ENCODE measurements at regions of chr11 and their contacts with region 1.

Region 1: GRCh38 chr11:114180301-114181055 is 115.7 kb upstream of the NNMT start:
- DNase-seq: peak; percentile 50 to 71 (median 67)
- H3K4me3 ChIP-seq: no peak overlapping the region
- H3K27ac ChIP-seq: no peak overlapping the region
- H3K4me1 ChIP-seq: peaks cover 13 to 36% (median 21%) of the 10 kb centered on the region in 4 experiments
- H3K27me3 ChIP-seq: no peaks in the 10 kb centered on the region

Region 2: GRCh38 chr11:114036156-114036811 is 144.2 kb before region 1 on chr11:
- CTCF ChIA-PET with region 1: interaction called, 103 read pairs
- POLR2A ChIA-PET with region 1: no interaction called
- DNase-seq: peak; percentile 73 to 76 (median 75)
- H3K4me3 ChIP-seq: peak overlapping the region in 4 of 7 experiments; percentile 6 to 66 (median 37)
- H3K27ac ChIP-seq: no peak overlapping the region
- H3K4me1 ChIP-seq: peaks cover 0 to 9% (median 6%) of the 10 kb centered on the region in 4 experiments
- H3K27me3 ChIP-seq: peaks cover 0 to 4% (median 0%) of the 10 kb centered on the region in 5 experiments

Region 3: DNA sequence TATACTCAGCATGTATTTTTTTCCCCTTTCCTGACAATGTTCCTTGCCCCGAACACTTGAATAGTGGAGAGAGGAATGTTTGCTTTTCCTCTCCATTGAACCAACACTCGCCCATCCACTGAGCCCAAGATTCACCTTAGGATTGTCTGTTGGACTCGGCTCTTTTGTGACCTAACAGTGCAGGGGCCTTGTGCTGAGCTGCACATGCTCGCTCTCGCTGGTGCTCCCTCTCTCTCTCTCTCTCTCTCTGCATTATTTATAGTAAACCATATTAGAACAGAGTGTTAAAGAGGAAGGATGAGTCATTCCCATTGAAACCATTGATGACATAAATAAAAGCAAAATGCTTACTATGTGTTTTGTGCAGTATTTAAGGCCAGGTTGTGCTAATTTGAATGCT is 100.3 kb before region 1 on chr11:
- CTCF ChIA-PET with region 1: interaction called, 25 read pairs
- POLR2A ChIA-PET with region 1: interaction called, 11 read pairs
- DNase-seq: peak; percentile 65 to 87 (median 79)
- H3K4me3 ChIP-seq: no peak overlapping the region
- H3K27ac ChIP-seq: peak overlapping the region; percentile 92 to 95
- H3K4me1 ChIP-seq: peaks cover 44 to 97% (median 93%) of the 10 kb centered on the region in 4 experiments
- H3K27me3 ChIP-seq: no peaks in the 10 kb centered on the region

Region 4: DNA sequence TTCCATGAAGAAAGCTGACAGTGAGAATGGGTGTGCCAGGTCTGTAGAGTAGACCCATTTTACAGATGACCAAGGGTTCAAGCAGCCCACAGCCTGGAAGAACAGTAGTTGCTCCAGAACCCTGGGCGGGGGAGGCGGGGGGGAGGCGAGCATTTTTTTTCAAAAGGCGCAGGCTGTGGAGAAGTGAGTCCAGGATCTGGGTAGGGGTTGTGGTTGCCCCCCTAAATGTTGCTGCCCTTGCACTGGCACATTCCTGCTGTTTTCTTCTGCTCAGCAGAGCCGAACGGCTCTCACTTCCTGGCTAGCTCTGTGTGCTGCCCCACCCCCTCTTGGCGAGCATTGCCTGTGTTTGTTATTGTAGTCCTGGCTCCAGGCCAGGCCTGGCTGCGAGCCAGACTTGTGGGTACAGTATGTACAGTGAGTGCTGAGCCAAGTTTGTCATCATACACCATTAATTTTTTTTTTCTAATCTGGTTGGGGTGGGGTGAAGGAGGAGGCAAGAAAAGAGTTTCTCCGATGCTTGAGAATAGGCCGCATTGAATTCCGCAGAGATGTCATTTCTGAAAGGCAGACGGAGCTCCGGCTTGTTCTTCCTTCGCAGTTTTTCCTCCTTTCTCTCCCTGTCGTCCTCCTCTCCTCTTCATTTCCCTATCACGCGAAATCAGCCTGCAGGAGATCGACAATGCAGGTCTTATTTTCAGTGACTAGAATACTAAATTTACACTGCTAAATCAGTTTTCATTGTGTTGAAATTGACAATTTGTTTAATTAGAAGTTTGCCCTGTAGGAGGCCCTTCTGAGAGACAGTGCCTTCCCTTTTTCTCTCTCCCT is 20.5 kb before region 1 on chr11:
- CTCF ChIA-PET with region 1: interaction called, 114 read pairs
- POLR2A ChIA-PET with region 1: no interaction called
- DNase-seq: peak; percentile 95 to 98 (median 97)
- H3K4me3 ChIP-seq: peak overlapping the region in 3 of 7 experiments; percentile 44 to 68 (median 51)
- H3K27ac ChIP-seq: peak overlapping the region in 1 of 2 experiments; percentile 31
- H3K4me1 ChIP-seq: peaks cover 6 to 53% (median 40%) of the 10 kb centered on the region in 4 experiments
- H3K27me3 ChIP-seq: peaks cover 0 to 3% (median 0%) of the 10 kb centered on the region in 5 experiments

Region 5: DNA sequence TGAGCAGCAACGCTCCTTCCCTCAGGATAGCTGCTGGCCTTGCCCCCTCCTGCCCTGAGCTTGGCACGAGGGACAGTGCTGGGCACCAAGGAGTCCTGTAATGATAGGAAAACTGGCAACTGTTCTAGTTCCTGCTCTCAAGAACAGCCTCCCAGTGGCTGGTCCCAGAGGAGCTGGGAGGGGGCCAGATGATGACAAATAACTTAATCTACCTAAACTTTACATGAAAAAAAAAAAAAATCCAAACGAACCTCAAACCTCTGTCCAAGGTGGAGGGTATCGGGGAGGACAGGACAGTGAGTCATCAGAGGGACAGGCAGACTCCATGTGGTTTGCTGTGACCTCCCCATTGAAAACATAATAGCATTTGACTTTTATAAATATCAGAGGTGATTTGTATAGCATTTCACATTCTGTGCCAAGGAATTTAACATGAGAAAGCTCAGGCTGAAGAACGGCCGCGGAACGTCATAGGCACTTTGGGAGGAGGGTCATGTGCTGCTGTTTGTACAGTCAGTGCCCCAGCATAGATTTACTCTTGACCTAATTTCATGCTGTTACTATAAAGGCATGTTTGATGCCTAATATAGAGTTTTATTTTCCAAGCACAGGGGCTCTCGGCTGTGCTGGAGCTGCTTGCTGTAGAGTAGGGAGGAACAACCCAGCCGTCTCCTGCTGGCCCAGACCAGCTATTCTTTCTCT is 17.5 kb after region 1 on chr11:
- CTCF ChIA-PET with region 1: interaction called, 70 read pairs
- POLR2A ChIA-PET with region 1: interaction called, 6 read pairs
- DNase-seq: no peak
- H3K4me3 ChIP-seq: no peak overlapping the region
- H3K27ac ChIP-seq: no peak overlapping the region
- H3K4me1 ChIP-seq: peaks cover 0 to 12% (median 5%) of the 10 kb centered on the region in 4 experiments
- H3K27me3 ChIP-seq: no peaks in the 10 kb centered on the region

Region 6: DNA sequence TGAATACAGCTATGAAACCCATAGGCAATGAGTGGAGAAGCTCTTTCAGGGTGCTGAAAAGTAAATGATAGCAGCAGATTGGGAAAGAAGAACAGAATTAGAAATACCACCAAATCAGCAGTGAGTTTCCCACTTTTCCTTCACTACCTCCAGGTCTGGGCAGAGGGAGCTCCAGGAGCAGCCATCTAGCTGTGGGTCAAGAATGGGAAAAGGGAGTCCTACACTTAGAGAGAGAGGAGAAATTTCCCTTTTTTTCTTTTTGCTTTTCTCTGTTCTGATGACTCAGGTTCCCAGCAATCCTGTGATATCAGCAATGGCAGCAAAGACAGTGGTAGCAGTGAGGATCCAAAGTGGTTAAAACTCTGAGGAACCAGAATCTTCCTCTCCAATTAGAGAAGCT is 761.7 kb after region 1 on chr11:
- CTCF ChIA-PET with region 1: no interaction called
- POLR2A ChIA-PET with region 1: no interaction called
- DNase-seq: no peak
- H3K4me3 ChIP-seq: no peak overlapping the region
- H3K27ac ChIP-seq: no peak overlapping the region
- H3K4me1 ChIP-seq: no peaks in the 10 kb centered on the region
- H3K27me3 ChIP-seq: no peaks in the 10 kb centered on the region